Mammary epithelial cell (primary cell): ENCODE measurements at regions of chr3 and their contacts with region 1.

Region 1: GRCh38 chr3:87298111-87298718 is 21.8 kb upstream of the POU1F1 start:
- DNase-seq: peak; percentile 22
- H3K4me3 ChIP-seq: no peak overlapping the region
- H3K27ac ChIP-seq: no peak overlapping the region
- H3K4me1 ChIP-seq: no peaks in the 10 kb centered on the region
- H3K27me3 ChIP-seq: peaks cover 4% of the 10 kb centered on the region
- CTCF ChIP-seq: peak; percentile 62 to 66

Region 2: DNA sequence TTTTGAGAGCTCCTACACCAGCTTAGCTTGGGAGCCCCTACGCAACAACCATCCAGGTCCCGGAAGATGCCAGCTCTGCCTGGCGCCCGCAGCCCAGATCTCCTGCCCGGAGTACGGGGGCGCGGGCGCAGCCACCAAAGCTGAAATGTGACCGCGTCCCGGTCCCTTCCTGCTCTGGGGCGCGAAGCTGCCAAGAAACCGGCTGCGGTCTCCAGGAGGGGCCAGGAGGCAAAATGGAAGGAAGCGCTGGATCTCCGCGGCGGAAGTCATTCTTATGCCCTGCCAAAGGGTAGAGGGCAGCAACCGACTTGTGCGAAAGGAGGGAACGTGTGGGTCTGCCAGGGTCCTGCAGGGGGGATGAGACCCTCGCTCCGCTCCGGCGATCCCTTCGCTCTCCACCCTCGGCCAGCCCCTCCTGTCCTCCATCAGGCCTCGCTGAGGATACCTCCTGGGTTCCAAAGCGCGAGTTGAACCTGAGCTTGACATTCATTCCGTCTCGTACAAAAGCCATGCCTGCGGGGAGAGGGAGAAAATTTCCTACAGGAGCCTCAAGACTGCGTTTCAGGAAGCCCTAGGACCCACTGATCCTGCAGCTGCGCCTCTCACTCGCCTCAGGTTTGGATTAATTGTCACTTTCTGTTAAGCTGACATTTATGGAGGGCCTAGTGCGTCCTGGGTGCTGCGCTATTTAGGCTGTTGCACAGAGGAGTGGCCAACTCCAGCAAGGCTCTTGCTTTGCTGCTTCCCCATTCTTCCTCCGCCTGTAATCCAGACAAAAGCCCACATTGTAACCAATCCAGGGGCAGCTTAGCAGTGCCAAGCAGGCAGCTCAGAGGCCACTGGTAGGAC is 209.0 kb before region 1 on chr3:
- CTCF ChIA-PET with region 1: no interaction called
- dilution Hi-C with region 1: no loop called
- in situ Hi-C with region 1: no loop called
- intact Hi-C with region 1: no loop called
- DNase-seq: peak; percentile 56
- H3K4me3 ChIP-seq: peak overlapping the region; percentile 37 to 62 (median 52)
- H3K27ac ChIP-seq: no peak overlapping the region
- H3K4me1 ChIP-seq: peaks cover 11% of the 10 kb centered on the region
- H3K27me3 ChIP-seq: no peaks in the 10 kb centered on the region
- CTCF ChIP-seq: no peak

Region 3: GRCh38 chr3:88180398-88180999 is 882.3 kb after region 1 on chr3:
- CTCF ChIA-PET with region 1: no interaction called
- dilution Hi-C with region 1: no loop called
- in situ Hi-C with region 1: no loop called
- intact Hi-C with region 1: loop called (anchors 5 kb)
- DNase-seq: peak; percentile 37
- H3K4me3 ChIP-seq: no peak overlapping the region
- H3K27ac ChIP-seq: no peak overlapping the region
- H3K4me1 ChIP-seq: no peaks in the 10 kb centered on the region
- H3K27me3 ChIP-seq: no peaks in the 10 kb centered on the region
- CTCF ChIP-seq: peak; percentile 20 to 52